ENCODE measurements at regions of chr5 and their contacts with region 1.

Region 1: DNA sequence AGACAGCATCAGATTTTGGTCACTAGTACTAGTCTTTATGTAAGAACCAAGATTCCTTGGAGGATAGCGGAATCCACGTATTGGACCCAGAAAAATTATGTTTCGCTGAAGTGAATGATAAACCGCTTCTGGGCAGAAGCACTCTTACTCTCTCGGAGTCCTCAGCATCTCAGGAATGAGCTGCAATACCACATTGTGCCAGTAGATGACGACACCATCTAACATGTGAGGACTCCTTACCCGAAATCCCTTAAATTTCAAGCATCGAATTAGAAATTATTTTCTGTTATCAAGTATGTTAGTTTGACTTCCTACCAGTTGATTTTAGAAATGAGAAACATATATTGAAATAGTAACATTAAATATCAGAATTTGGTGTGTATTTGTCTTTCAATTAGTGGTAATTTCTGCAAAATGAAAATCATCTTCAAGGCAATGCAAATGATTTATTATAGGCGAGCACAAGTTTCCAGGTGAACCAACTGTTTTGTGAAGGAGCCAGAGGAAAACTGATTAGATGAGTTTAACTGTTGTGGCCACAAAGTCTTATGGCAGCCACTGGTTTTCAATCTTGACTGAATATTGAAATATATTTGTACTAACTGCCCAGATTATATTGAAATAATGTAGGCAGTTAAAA is 66.0 kb upstream of the CAMK4 start:
- DNase-seq: peak in 1 of 2 donors; percentile 74
- ATAC-seq: peak; percentile 50

Region 2: DNA sequence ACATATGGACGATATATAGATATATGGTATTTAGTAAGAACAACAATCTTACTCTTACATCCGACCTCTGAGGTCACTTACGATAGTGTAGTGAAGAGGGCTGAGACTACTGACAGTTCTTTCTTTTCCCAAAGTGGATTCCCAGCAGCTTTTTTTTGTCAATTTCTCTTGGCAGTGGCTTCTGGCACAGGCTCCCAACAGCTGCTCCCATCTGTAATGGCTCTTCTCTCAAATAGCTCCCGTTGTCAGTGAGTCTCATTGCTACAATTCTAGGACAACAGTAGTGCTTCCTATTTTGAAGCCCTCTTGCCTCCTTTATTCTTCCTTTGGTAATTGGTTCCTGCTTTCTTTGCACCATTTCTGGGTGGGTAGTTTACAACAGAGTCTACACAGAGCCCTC is 351.1 kb before region 1 on chr5:
- intact Hi-C with region 1: no loop called
- DNase-seq: peak in 1 of 2 donors; percentile 10
- ATAC-seq: no peak

Region 3: GRCh38 chr5:111072949-111073682 is 85.1 kb before region 1 on chr5:
- intact Hi-C with region 1: no loop called
- DNase-seq: peak in 1 of 2 donors; percentile 57
- ATAC-seq: peak; percentile 69

Region 4: DNA sequence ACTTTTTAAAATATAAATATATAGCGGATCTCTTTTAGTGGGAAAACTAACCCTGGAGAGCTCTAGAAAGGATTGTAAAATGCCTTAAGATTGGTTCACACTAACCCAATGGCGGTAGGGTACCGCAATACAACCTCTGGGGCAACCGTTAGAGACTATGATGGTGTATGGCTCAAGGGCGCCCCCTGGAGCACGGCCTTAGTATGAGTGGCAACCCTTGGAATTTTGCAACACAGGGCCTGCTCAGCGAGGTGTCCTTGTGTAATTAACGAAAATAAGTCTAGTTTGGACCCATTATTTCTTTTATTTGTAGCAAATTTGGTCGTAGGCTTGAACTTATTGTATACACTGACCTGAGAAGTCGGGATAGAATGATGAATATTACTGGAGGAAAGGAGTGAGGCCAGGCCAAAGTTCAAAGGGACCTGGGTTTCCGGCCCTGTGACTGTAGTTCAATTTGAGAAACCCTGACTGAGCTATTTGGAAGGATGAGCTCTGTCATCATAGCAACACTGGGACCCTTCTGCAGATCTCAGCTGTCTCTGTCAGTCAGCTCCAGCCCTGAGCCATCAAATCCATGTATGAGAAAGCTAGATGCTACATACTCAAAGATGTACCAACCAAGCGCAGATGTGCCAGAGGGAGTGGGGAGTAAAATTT is 120.8 kb after region 1 on chr5:
- intact Hi-C with region 1: loop called (anchors 5 to 10 kb)
- DNase-seq: peak in 1 of 2 donors; percentile 74
- ATAC-seq: peak; percentile 71

Region 5: DNA sequence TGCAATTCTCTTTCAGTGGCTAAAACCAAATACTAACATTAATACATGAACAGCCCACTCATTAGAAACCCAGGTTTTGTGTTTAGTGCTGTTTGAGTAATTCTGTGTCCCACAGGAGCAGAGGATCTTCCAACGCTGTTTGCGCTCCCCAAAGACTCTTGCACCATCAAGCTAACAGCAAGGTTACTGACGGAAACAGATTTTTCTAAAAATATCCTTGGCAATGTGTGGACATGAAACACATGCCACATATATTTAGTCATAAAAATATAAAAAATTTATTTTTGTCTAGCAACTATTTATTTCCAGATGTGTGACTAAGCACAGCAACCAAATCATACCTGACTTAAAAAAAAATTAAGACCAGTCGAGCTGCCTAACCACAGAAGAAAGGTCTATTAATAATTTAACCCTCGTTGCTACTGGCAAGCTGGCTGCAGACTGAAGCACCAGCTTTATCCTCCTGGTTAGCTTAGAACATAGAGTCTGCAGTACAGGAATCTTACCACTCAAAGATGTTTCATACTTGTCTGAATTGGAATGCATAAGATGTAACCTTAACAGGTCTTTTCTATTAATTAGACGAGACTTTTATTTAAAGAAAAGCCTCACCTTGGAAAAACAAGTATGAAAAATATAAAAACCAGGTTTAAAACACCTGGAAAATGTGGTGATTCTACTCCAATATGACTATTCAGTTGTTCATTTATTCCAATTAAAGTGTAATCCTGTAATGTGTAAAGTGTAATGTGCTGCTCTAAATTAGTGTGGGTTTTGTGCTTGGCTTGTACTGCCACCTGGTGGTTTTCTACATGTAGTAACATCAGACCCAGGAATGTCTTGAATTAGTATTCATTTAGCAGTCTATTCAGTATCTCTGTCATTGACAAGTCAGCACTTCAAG is 988.4 kb after region 1 on chr5:
- intact Hi-C with region 1: loop called in 1 of 2 experiments (anchors 10 kb)
- DNase-seq: peak; percentile 34 to 49
- ATAC-seq: peak; percentile 81